GM12878 (cell line): ENCODE measurements at regions of chr4 and their contacts with region 1.

Region 1: GRCh38 chr4:80184053-80184790 is 13.1 kb upstream of the PRDM8 start:
- DNase-seq: no peak
- ATAC-seq: peak; percentile 98
- H3K4me3 ChIP-seq: peak overlapping the region; percentile 87
- H3K27ac ChIP-seq: no peak overlapping the region
- H3K4me1 ChIP-seq: peaks cover 8% of the 10 kb centered on the region
- H3K27me3 ChIP-seq: peaks cover 8 to 10% of the 10 kb centered on the region in 2 experiments
- CTCF ChIP-seq: peak; percentile 85 to 87 (median 86)
- EP300 ChIP-seq: no peak
- POLR2A ChIP-seq: no peak
- RAD21 ChIP-seq: peak; percentile 64

Region 2: DNA sequence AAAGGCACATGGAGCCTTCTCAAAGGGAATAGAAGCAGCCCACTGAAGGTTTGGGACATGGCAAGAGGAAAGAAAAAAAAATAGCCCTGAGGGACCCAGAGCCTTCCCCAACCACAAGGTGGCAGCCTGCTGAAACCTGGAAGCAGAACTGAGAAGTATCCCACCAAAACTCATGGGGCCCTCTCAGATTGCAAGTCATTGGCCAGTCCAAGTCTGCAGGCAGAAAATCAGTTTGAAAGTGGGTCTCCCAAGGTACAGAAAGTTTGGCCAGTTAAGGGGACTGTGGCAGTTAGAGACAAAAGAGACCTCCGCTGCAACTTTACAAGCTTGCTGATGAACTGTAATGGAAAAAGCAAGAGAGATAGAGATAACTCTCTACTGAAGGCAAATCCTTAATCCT is 267.0 kb before region 1 on chr4:
- CTCF ChIA-PET with region 1: interaction called, 14 read pairs
- POLR2A ChIA-PET with region 1: no interaction called
- RAD21 ChIA-PET with region 1: interaction called, 5 read pairs
- SMC1A ChIA-PET with region 1: interaction called, 4 read pairs
- in situ Hi-C with region 1: no loop called
- intact Hi-C with region 1: loop called (anchors 1 kb)
- DNase-seq: peak; percentile 8
- ATAC-seq: peak; percentile 92
- H3K4me3 ChIP-seq: no peak overlapping the region
- H3K27ac ChIP-seq: no peak overlapping the region
- H3K4me1 ChIP-seq: no peaks in the 10 kb centered on the region
- H3K27me3 ChIP-seq: no peaks in the 10 kb centered on the region
- CTCF ChIP-seq: peak; percentile 68 to 83 (median 71)
- EP300 ChIP-seq: no peak
- POLR2A ChIP-seq: no peak
- RAD21 ChIP-seq: peak; percentile 71

Region 3: DNA sequence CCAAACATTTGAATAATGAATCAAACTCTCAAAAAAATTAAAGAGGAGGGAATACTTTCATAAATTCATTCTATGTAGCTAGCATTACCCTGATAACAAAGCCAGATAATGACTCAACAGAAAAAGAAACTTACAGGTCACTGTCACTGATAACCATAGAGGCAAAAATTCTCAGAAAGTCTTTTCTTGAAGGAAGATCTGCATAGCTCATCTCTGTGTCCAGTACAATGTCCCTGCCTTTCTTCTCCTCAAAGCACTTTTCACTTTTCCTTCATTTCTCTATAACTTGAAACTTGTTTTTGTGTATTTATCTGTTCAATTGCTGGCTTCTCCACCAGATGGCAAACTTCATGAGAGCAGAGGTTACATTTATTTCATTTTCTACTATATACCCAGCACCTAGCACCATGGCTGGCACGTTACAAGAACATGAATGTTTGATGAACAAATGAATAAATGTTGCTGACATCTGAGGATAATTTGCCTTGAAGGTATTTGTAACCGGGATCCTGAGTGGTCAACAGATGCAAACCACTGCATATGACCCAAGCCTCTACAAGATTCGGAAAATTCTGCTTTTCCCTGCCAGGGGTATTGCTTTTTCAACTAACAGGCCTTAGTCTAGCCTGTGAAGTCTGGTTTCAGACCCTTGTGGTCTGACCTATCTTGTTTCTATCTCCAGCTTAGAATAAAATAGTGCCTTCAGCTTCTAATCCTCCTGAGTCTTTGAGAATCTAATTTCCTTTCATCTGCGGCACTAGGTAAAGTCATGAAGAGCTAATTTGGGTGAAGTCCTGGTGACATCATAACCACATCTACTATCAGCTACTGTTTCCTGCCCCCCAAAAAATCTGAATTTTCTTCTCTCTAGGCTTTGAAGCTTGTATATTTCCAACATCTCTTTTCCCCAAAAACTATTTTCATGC is 58.7 kb before region 1 on chr4:
- CTCF ChIA-PET with region 1: interaction called, 63 read pairs
- POLR2A ChIA-PET with region 1: no interaction called
- RAD21 ChIA-PET with region 1: interaction called, 15 read pairs
- SMC1A ChIA-PET with region 1: interaction called, 38 read pairs
- in situ Hi-C with region 1: no loop called
- intact Hi-C with region 1: loop called (anchors 1 kb)
- DNase-seq: no peak
- ATAC-seq: peak; percentile 78
- H3K4me3 ChIP-seq: no peak overlapping the region
- H3K27ac ChIP-seq: no peak overlapping the region
- H3K4me1 ChIP-seq: no peaks in the 10 kb centered on the region
- H3K27me3 ChIP-seq: no peaks in the 10 kb centered on the region
- CTCF ChIP-seq: peak; percentile 36 to 42 (median 37); a peak in 5 of 6 replicates
- EP300 ChIP-seq: no peak
- POLR2A ChIP-seq: no peak
- RAD21 ChIP-seq: peak; percentile 37

Region 4: GRCh38 chr4:80173401-80173800 is 10.8 kb before region 1 on chr4:
- CTCF ChIA-PET with region 1: interaction called, 41 read pairs
- POLR2A ChIA-PET with region 1: no interaction called
- RAD21 ChIA-PET with region 1: interaction called, 15 read pairs
- SMC1A ChIA-PET with region 1: interaction called, 55 read pairs
- in situ Hi-C with region 1: no loop called
- intact Hi-C with region 1: no loop called
- DNase-seq: no peak
- ATAC-seq: peak; percentile 97
- H3K4me3 ChIP-seq: no peak overlapping the region
- H3K27ac ChIP-seq: no peak overlapping the region
- H3K4me1 ChIP-seq: peaks cover 15% of the 10 kb centered on the region
- H3K27me3 ChIP-seq: no peaks in the 10 kb centered on the region
- CTCF ChIP-seq: no peak
- EP300 ChIP-seq: 0 out of 4 replicates have a peak, but pooled peaks of 1 of the 2 experiments have one; percentile 4
- POLR2A ChIP-seq: no peak
- RAD21 ChIP-seq: no peak

Region 5: GRCh38 chr4:80215449-80216052 is 31.3 kb after region 1 on chr4:
- CTCF ChIA-PET with region 1: interaction called, 22 read pairs
- POLR2A ChIA-PET with region 1: no interaction called
- RAD21 ChIA-PET with region 1: interaction called, 5 read pairs
- SMC1A ChIA-PET with region 1: interaction called, 16 read pairs
- in situ Hi-C with region 1: no loop called
- intact Hi-C with region 1: no loop called
- DNase-seq: no peak
- ATAC-seq: peak; percentile 49; the same call in 2 of the 3 replicates
- H3K4me3 ChIP-seq: no peak overlapping the region
- H3K27ac ChIP-seq: no peak overlapping the region
- H3K4me1 ChIP-seq: no peaks in the 10 kb centered on the region
- H3K27me3 ChIP-seq: peaks cover 0 to 7% of the 10 kb centered on the region in 2 experiments; a peak in 2 of 4 replicates
- CTCF ChIP-seq: peak; percentile 41 to 62 (median 58)
- EP300 ChIP-seq: no peak
- POLR2A ChIP-seq: no peak
- RAD21 ChIP-seq: peak; percentile 72